Right ventricle myocardium inferior (tissue), 1 donor: ENCODE measurements at regions of chr17 and their contacts with region 1.

Region 1: GRCh38 chr17:10127819-10128425 is 70.5 kb downstream of the GAS7 start:
- DNase-seq: peak; percentile 94
- ATAC-seq: peak; percentile 92

Region 2: GRCh38 chr17:10036511-10037061 is 91.3 kb before region 1 on chr17:
- intact Hi-C with region 1: loop called (anchors 5 kb)
- DNase-seq: peak; percentile 93
- ATAC-seq: peak; percentile 94

Region 3: DNA sequence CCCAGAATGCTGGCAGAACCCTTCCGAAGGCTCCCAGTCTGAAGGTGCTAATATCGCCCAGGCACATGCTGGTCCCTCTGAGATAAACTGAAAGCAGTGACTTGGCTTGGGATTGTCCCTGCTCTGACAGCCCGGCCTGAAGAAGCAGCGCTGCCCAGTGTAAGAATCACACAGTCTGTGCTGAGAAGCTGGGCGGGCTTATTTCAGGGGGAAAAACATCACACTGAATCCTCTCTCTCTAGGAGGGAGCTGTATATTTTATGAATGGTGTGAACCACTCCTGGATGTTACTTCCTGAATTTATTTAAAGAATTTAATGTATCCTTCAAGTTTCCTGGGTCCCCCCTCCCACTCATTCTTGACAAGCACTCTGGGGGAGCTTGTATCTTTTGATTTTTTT is 34.2 kb after region 1 on chr17:
- intact Hi-C with region 1: no loop called
- DNase-seq: no peak
- ATAC-seq: peak; percentile 75

Region 4: DNA sequence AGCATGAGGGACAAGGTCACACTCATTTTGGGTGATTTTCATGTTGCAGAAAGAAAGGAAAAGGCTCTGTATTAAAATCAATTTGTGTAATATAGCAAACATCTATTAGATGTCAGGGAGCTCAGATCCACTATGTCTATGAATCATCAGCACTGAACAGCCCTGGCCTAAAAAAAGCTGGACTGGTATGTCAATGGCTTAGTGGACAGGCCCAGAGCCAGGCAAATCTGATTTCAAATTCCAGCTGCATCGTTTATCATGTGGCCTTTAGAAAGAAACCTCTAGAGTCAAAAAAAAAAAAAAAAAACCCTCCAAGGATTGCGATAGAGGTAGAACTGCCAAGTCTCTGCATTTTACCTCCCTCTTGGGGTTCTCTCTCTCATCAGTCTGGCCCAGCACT is 65.0 kb after region 1 on chr17:
- intact Hi-C with region 1: no loop called
- DNase-seq: no peak
- ATAC-seq: peak; percentile 61

Region 5: DNA sequence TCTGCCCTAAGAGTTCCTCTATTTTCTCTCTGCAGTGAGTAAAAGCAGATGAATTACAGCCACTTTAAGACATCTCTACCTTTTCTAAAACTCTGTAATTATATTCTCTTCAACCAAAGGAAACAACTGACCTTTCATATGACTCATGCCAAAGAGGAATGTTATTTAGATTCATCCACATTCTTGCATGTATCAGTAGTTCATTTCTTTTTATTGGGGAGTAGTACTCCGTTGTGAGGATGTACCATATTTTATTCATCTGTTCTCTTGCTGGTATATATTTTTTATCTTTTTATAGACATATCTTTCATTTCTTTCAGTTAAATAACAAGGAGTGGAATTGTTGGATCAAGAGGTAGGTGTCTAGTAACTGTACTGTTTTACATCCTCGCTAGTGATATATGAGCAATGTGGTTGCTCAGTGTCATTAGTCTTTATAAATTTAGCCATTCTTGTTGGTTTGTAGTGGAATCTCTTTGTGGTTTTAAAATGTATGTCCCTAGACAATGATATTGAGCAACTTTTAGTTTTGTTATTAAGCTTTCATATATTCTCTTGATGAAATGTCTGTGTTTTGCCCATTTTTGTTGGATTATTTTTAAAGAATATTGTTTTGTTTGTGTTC is 301.6 kb after region 1 on chr17:
- intact Hi-C with region 1: no loop called
- DNase-seq: no peak
- ATAC-seq: no peak